ENCODE measurements at regions of chr9 and their contacts with region 1.

Region 1: GRCh38 chr9:104075801-104076753 is 18.0 kb upstream of the SMC2 start:
- DNase-seq: no peak
- H3K4me3 ChIP-seq: no peak overlapping the region
- H3K27ac ChIP-seq: no peak overlapping the region
- H3K4me1 ChIP-seq: no peaks in the 10 kb centered on the region
- H3K27me3 ChIP-seq: no peaks in the 10 kb centered on the region
- CTCF ChIP-seq: no peak

Region 2: GRCh38 chr9:104009826-104010225 is 66.3 kb before region 1 on chr9:
- intact Hi-C with region 1: loop called (anchors 10 kb)
- DNase-seq: no peak
- H3K4me3 ChIP-seq: no peak overlapping the region
- H3K27ac ChIP-seq: no peak overlapping the region
- H3K4me1 ChIP-seq: no peaks in the 10 kb centered on the region
- H3K27me3 ChIP-seq: no peaks in the 10 kb centered on the region
- CTCF ChIP-seq: no peak

Region 3: DNA sequence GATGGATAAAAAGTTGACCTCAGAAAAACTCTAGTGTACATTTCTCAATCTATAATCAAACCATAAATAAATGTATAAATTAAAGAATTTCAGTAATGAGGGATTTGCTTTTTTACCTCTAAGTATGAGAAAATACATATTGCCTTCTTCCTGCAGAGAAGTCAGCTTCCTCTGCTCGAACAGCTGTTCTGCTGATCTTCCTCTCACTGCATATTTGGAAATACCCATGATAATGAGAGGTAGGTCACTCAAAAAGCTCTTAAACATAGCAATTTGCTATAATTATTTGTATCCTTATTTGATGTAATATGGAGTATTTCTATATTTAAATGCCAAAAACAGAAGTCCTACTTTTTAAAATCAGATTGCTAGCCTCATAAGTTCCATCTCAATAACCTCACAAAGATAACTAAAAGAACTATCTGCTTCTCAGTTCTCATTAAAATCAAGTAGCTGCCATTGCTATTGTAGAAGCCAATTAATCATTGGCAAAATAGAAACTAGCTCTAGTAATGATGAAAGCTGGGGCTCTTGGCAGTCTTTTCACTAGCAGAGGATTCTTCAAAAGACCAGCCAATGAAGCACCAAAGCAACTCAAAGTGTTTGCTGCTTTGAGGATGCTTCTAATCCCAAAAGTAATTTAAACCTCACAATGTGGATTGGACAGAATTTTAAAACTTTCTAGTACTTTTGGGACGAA is 582.6 kb after region 1 on chr9:
- intact Hi-C with region 1: no loop called
- DNase-seq: no peak
- H3K4me3 ChIP-seq: no peak overlapping the region
- H3K27ac ChIP-seq: no peak overlapping the region
- H3K4me1 ChIP-seq: no peaks in the 10 kb centered on the region
- H3K27me3 ChIP-seq: no peaks in the 10 kb centered on the region
- CTCF ChIP-seq: no peak

Measured in colonic mucosa (tissue), 4 donors.